ENCODE measurements at regions of chr17 and their contacts with region 1.

Region 1: GRCh38 chr17:11608396-11608795 is 10.1 kb downstream of the DNAH9 start:
- DNase-seq: peak; percentile 62
- H3K4me3 ChIP-seq: no peak overlapping the region
- H3K27ac ChIP-seq: peak overlapping the region; percentile 51 to 72 (median 58)
- H3K4me1 ChIP-seq: peaks cover 5 to 20% (median 11%) of the 10 kb centered on the region in 4 donors
- H3K27me3 ChIP-seq: no peaks in the 10 kb centered on the region
- CTCF ChIP-seq: no peak
- EP300 ChIP-seq: no peak
- POLR2A ChIP-seq: no peak

Region 2: DNA sequence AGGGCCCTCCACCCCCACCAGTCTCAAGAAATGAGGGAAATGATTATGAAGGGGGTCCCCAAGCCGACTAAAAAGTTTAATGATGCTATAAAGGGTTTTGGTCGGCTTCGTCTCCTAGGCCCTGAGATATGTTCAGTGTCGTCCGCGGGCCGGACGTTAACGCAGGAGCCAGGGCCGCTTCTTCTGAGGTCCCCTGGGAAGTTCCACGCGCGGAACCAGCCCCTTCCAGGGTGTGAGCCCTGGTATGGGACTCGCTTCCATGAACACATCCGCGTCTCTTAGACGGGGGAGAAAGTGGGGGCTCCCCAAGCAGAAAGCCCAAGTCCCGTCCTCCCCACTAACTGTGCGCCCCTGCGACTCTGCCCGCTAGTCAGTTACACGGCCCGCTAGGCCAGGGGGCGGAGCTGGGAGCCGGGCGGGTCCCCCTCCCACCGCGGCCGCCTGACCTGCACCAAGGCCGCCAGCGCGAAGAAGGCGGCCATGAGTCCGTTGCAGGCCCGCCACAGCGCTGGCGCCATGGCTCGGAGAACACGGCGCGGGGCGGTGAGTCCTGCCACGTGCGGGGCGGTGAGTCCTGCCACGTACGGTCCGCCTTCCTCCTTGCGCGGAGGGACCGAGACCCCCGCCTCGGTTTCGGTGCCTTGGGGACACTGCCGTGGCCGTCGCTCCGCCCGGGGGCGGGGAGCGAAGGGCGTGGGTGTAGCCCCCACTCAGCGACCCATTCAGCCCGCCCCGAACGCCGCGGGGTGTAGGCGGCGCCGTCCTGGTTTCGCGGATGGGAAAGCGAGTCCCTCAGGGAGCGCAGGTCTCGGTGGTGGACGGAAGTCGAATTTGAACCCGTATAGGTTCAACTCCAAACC is 878.8 kb before region 1 on chr17 and contains the start of gene TMEM220:
- in situ Hi-C with region 1: loop called in 1 of 4 experiments (anchors 25 kb)
- intact Hi-C with region 1: no loop called
- DNase-seq: peak; percentile 79
- H3K4me3 ChIP-seq: peak within 1 kb of the TSS; percentile 55 to 72 (median 64)
- H3K27ac ChIP-seq: peak within 1 kb of the TSS; percentile 89 to 94 (median 92)
- H3K4me1 ChIP-seq: peaks cover 0 to 45% (median 17%) of the 10 kb centered on the region in 4 donors
- H3K27me3 ChIP-seq: no peaks in the 10 kb centered on the region
- CTCF ChIP-seq: no peak
- EP300 ChIP-seq: no peak
- POLR2A ChIP-seq: peak; percentile 77
- total RNA-seq, gene TMEM220: 2.4 to 18.2 (median 8.1) TPM in 3 of 4 donors, not detected in the other

Region 3: DNA sequence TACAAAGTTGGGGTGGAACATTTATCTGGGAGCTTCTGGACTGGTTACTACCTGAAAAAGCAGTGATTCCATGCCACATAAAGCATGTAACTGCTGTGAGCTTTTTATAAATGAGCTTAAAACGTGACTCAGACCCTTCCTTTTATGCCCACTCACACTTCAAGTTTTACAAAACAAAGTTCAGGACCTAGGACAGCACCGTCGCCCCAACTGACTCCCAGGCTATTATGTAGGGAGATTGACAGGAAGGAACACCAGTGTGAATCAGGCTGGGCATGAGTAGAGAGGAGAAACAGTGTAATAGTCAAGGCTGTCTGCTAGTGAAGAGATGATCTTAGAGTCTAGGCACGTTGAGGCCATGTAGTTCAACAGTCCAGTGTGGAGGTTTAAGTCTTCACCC is 101.8 kb before region 1 on chr17:
- in situ Hi-C with region 1: loop called in 1 of 4 experiments (anchors 25 kb)
- intact Hi-C with region 1: no loop called
- DNase-seq: no peak
- H3K4me3 ChIP-seq: no peak overlapping the region
- H3K27ac ChIP-seq: no peak overlapping the region
- H3K4me1 ChIP-seq: no peaks in the 10 kb centered on the region
- H3K27me3 ChIP-seq: no peaks in the 10 kb centered on the region
- CTCF ChIP-seq: no peak
- EP300 ChIP-seq: no peak
- POLR2A ChIP-seq: no peak

Region 4: DNA sequence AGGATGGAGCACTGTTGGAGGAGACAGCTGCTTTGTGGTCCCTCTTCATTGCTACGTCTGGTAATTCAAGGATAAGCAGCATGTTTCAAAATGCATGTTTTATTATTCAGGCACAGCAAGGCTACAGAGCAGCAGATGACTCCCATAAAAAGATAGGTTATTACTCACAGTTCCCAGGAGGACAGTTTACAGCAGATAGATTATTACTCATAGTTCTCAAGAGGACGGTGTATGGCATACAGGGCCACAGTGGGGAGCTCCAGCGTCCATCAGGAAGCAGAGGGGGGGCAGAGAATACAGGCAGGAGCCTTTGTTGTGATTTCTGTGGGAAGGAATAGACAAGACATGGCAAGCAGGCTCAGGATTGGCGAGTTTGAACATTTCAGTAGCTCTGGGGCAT is 62.7 kb after region 1 on chr17:
- in situ Hi-C with region 1: no loop called
- intact Hi-C with region 1: no loop called
- DNase-seq: no peak
- H3K4me3 ChIP-seq: no peak overlapping the region
- H3K27ac ChIP-seq: no peak overlapping the region
- H3K4me1 ChIP-seq: no peaks in the 10 kb centered on the region
- H3K27me3 ChIP-seq: no peaks in the 10 kb centered on the region
- CTCF ChIP-seq: no peak
- EP300 ChIP-seq: no peak
- POLR2A ChIP-seq: no peak

Measured in transverse colon (tissue), 4 donors.